Caco-2 (cell line): ENCODE measurements at regions of chr7 and their contacts with region 1.

Region 1: GRCh38 chr7:28536259-28536658 is 123.9 kb downstream of the CREB5 start:
- DNase-seq: peak; percentile 66
- H3K4me3 ChIP-seq: no peak overlapping the region
- H3K4me3 Mint-ChIP-seq: no peak overlapping the region
- H3K27ac Mint-ChIP-seq: no peak overlapping the region
- H3K4me1 ChIP-seq: 0 out of 2 replicates have a peak, but pooled peaks cover 9% of the 10 kb centered on the region
- H3K4me1 Mint-ChIP-seq: peaks cover 9% of the 10 kb centered on the region
- H3K27me3 ChIP-seq: no peaks in the 10 kb centered on the region
- H3K27me3 Mint-ChIP-seq: no peaks in the 10 kb centered on the region
- CTCF ChIP-seq: peak; percentile 62 to 78

Region 2: DNA sequence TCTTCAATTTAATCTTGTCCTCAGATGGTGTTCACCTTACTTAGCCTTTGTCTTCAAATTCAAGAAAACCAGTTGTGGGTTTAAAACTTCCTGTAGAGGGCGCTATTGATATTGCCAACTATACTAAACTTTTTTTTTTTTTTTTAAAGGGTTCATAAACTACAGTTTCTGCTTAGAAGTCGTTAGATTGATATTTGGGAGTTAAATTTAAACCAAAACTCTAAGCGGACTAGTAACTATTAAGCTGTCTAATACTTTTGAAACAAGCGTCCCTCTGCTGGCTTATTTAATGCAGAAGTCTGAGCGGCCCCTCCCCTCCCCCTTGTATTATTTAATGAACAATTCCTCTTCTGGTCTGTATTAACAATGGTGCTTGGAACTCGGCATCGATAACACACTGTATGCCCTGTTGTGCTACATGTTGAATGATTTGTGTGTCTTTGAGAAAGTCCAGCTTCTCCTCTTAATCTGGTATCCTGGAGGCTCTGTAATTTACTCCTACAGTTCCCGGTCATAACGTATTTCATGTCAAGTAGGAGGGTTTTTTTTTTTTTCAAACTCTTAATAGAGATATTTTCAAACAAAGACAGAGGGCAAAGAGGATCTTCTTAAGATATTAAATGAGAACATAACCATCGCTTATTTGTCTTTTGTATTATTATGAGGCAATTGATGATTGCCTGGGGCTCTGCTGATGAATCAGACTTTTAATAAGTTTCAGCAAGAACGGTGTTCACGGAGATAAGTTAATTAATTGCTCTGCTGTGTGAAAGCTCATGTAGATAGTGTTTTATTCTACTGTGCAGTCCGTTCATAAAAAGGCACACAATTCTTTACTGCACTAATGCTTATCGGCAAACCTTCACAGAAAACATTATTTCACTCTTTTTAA is 146.5 kb before region 1 on chr7:
- CTCF ChIA-PET with region 1: no interaction called
- POLR2A ChIA-PET with region 1: no interaction called
- intact Hi-C with region 1: loop called (anchors 1 kb)
- DNase-seq: peak in 1 of 2 experiments; percentile 50
- H3K4me3 ChIP-seq: no peak overlapping the region
- H3K4me3 Mint-ChIP-seq: peak overlapping the region; percentile 46
- H3K27ac Mint-ChIP-seq: no peak overlapping the region
- H3K4me1 ChIP-seq: no peaks in the 10 kb centered on the region; the same call in 1 of the 2 replicates
- H3K4me1 Mint-ChIP-seq: no peaks in the 10 kb centered on the region
- H3K27me3 ChIP-seq: no peaks in the 10 kb centered on the region
- H3K27me3 Mint-ChIP-seq: peaks cover 7% of the 10 kb centered on the region
- CTCF ChIP-seq: peak; percentile 67 to 78

Region 3: DNA sequence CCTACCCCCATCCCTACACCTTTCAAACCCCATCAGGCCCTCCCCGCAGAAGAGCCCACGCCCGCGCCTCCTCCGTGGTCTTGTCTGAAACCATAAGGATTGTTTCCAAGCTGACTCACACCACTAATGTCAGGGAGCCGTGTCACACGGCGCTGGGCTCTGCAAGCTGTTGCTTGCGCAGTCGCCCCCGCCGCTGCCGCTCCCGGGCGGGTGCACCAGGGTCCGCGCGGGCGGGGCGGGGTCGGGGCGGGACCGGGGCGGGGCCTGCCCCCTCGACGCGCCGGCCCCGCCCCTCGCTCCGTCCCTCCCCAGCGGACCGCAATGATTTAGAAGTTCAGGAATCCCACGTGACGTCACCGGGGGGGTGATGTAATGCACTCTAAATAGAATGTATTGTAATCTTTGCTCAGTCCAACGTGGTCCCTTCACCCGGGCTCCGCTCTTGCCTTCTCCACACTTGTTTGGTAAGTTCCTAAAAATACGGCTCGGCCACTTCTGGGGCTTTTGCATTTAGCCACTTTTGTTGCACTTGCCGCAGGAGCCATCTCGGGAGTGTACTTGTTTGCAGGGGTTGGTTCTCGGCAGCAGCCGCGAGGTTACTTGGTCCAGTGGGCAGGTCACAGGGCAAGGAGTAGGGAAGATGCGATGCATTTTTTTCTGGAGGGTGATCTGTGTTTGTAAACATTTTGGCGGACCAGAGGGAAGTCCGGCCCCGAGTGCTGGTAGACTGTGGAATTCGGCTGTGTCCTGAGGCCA is 127.1 kb before region 1 on chr7:
- CTCF ChIA-PET with region 1: interaction called, 10 read pairs
- POLR2A ChIA-PET with region 1: no interaction called
- intact Hi-C with region 1: loop called (anchors 2 kb)
- DNase-seq: peak; percentile 92 to 93
- H3K4me3 ChIP-seq: peak overlapping the region; percentile 47
- H3K4me3 Mint-ChIP-seq: peak overlapping the region; percentile 85
- H3K27ac Mint-ChIP-seq: peak overlapping the region; percentile 89
- H3K4me1 ChIP-seq: peaks cover 5% of the 10 kb centered on the region
- H3K4me1 Mint-ChIP-seq: peaks cover 9% of the 10 kb centered on the region
- H3K27me3 ChIP-seq: no peaks in the 10 kb centered on the region; the same call in 1 of the 2 replicates
- H3K27me3 Mint-ChIP-seq: no peaks in the 10 kb centered on the region
- CTCF ChIP-seq: no peak

Region 4: DNA sequence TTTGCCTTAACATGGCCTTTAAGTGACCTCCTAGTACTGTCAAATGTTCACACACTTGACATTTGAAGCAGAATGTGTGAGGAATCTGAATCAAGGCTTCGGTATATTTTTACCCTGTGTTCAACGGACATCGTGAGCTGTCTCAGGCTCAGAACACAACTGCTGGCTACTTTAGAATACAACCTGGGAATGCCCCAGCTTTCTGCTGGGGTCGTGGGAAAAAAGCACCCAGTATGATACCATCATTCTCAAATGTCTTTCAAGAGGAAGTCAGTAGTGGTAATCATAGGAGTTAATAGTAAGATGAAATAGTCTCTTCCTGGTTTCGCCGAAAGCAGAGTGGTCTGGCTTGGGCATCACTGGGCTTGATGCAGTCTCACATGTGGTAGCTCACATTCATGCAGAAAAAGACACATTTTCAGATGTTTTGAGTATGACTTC is 56.7 kb before region 1 on chr7:
- CTCF ChIA-PET with region 1: no interaction called
- POLR2A ChIA-PET with region 1: no interaction called
- intact Hi-C with region 1: loop called (anchors 10 kb)
- DNase-seq: no peak
- H3K4me3 ChIP-seq: no peak overlapping the region
- H3K4me3 Mint-ChIP-seq: no peak overlapping the region
- H3K27ac Mint-ChIP-seq: no peak overlapping the region
- H3K4me1 ChIP-seq: peaks cover 41% of the 10 kb centered on the region
- H3K4me1 Mint-ChIP-seq: peaks cover 22% of the 10 kb centered on the region
- H3K27me3 ChIP-seq: no peaks in the 10 kb centered on the region
- H3K27me3 Mint-ChIP-seq: no peaks in the 10 kb centered on the region
- CTCF ChIP-seq: no peak